ENCODE measurements at regions of chr10 and their contacts with region 1.

Region 1: GRCh38 chr10:67327626-67328535 is 368.1 kb downstream of the CTNNA3 start:
- DNase-seq: no peak
- H3K4me3 Mint-ChIP-seq: no peak overlapping the region
- H3K27ac Mint-ChIP-seq: no peak overlapping the region
- H3K4me1 Mint-ChIP-seq: no peaks in the 10 kb centered on the region
- H3K27me3 Mint-ChIP-seq: no peaks in the 10 kb centered on the region
- CTCF ChIP-seq: no peak

Region 2: DNA sequence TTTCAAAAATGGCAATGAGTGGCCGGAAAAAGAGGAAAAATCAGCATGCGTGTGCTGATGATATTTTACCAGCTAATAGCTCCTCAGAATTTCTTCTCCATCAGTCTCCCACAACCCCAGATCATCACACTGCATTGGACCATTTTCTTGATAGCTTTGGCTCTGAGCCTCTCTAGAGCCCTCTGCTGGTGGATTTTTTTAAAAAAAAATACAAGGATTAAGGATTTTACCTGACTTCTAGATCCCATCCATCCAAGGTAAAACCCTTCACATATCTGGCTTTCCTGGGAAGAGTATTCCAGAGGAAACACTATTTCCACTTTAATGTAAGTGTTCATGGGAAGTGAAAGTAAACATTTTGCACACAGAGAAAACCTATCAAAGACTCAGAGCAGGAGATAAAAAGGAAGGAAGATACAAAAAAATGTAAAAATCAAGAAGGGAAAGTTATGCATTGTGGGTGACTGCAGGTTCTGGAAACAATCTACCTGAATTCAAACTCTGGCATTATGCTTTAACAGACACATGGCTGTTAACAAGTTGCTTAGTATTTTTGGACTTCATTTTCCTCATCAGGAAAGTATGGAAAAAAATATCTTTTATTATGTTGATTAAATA is 21.2 kb before region 1 on chr10:
- CTCF ChIA-PET with region 1: interaction called, 14 read pairs
- POLR2A ChIA-PET with region 1: no interaction called
- intact Hi-C with region 1: no loop called
- DNase-seq: peak; percentile 53
- H3K4me3 Mint-ChIP-seq: no peak overlapping the region
- H3K27ac Mint-ChIP-seq: no peak overlapping the region
- H3K4me1 Mint-ChIP-seq: no peaks in the 10 kb centered on the region
- H3K27me3 Mint-ChIP-seq: peaks cover 39% of the 10 kb centered on the region
- CTCF ChIP-seq: peak; percentile 55